ENCODE measurements at regions of chr14 and their contacts with region 1.

Region 1: GRCh38 chr14:102474934-102475333 is 34.6 kb downstream of the ANKRD9 start:
- DNase-seq: no peak
- ATAC-seq: no peak
- H3K4me3 ChIP-seq: no peak overlapping the region
- H3K27ac ChIP-seq: no peak overlapping the region
- H3K4me1 ChIP-seq: peaks cover 4% of the 10 kb centered on the region
- H3K27me3 ChIP-seq: no peaks in the 10 kb centered on the region
- CTCF ChIP-seq: no peak

Region 2: GRCh38 chr14:102272392-102272791 is 202.5 kb before region 1 on chr14:
- CTCF ChIA-PET with region 1: no interaction called
- POLR2A ChIA-PET with region 1: no interaction called
- intact Hi-C with region 1: no loop called
- DNase-seq: no peak
- ATAC-seq: no peak
- H3K4me3 ChIP-seq: no peak overlapping the region
- H3K27ac ChIP-seq: peak overlapping the region; percentile 43
- H3K4me1 ChIP-seq: peaks cover 24% of the 10 kb centered on the region
- H3K27me3 ChIP-seq: no peaks in the 10 kb centered on the region
- CTCF ChIP-seq: no peak

Region 3: GRCh38 chr14:102430212-102430908 is 44.6 kb before region 1 on chr14:
- CTCF ChIA-PET with region 1: no interaction called
- POLR2A ChIA-PET with region 1: interaction called, 12 read pairs
- intact Hi-C with region 1: no loop called
- DNase-seq: no peak
- ATAC-seq: peak; percentile 43; the same call in 1 of the 2 replicates
- H3K4me3 ChIP-seq: no peak overlapping the region
- H3K27ac ChIP-seq: no peak overlapping the region
- H3K4me1 ChIP-seq: no peaks in the 10 kb centered on the region
- H3K27me3 ChIP-seq: no peaks in the 10 kb centered on the region
- CTCF ChIP-seq: no peak

Region 4: GRCh38 chr14:102461490-102462338 is 13.2 kb before region 1 on chr14:
- CTCF ChIA-PET with region 1: no interaction called
- POLR2A ChIA-PET with region 1: interaction called, 14 read pairs
- intact Hi-C with region 1: no loop called
- DNase-seq: no peak
- ATAC-seq: no peak
- H3K4me3 ChIP-seq: no peak overlapping the region
- H3K27ac ChIP-seq: no peak overlapping the region
- H3K4me1 ChIP-seq: no peaks in the 10 kb centered on the region
- H3K27me3 ChIP-seq: no peaks in the 10 kb centered on the region
- CTCF ChIP-seq: no peak

Region 5: DNA sequence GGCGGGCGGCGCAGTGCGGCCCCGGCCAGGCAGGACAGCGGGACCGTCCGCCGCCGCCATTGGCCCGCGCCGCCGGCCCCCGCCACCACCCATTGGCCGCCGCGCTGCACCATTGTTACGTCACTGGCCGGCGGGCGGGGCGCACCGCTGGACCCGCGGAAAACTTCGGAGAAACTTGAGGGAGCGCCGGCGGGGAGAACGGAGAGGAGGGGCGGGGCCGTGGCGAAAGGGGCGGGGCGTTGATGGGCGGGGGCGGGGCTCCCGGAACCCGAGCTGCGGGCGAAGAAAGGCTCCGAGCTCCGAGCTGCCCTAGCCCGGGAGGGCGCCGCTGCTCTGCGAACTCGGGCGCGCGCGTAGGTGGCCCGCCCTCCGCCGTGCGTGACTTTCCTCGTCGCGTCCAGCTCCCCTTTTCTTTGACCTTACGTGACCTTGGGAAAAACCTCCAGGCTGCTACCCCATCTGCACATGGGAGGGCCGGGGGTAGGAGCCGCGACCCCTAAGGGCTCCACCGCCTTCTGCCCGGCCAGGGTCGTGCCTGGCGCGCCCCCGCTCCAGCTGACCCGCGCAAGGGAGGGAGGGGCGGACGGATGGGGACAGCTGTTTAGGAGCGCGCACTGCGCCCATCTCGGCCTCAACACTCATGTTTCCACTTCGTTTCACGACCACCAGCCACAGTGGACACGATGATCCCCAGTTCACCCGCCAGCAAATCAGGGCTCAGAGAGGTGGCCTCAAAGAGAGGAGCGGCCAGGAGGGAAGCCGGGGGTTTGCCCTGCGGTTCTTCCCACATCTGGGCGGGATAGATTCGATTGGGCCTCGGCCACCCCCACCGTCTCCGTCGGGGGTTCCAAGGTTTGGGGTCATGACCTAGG is 35.0 kb after region 1 on chr14 and contains the start of gene ANKRD9:
- CTCF ChIA-PET with region 1: no interaction called
- POLR2A ChIA-PET with region 1: no interaction called
- intact Hi-C with region 1: no loop called
- DNase-seq: peak; percentile 96
- ATAC-seq: peak; percentile 77
- H3K4me3 ChIP-seq: peak within 1 kb of the TSS; percentile 80
- H3K27ac ChIP-seq: peak within 1 kb of the TSS; percentile 71
- H3K4me1 ChIP-seq: peaks cover 22% of the 10 kb centered on the region
- H3K27me3 ChIP-seq: no peaks in the 10 kb centered on the region
- CTCF ChIP-seq: no peak
- total RNA-seq, gene ANKRD9: 52.6 and 87.6 TPM in 2 replicates